MCF 10A (cell line): ENCODE measurements at regions of chr10 and their contacts with region 1.

Region 1: DNA sequence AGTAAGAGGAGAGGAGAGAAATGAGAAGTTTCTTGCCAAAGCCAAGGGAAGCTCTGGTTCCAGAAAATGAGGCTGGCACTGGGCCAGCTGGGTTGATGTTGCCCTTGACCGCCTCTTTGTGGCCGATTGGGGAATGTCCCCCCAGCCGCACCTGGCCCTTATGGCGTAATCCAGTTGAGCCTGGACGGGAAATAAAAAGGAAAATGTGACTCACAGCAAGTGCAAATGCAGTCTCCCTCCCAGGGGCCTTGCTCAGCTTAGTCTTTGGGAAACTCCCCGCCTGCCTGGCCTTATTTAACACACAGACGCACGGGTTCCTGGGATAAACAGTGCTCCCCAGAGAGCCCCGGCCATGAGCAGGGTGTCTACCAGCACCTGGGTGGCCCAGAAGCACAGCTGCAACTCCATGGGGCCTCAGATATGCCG is 174.8 kb downstream of the KIAA1217 start:
- DNase-seq: peak; percentile 98
- H3K4me3 Mint-ChIP-seq: peak overlapping the region; percentile 63
- H3K27ac Mint-ChIP-seq: peak overlapping the region; percentile 65
- H3K4me1 Mint-ChIP-seq: peaks cover 25% of the 10 kb centered on the region
- H3K27me3 Mint-ChIP-seq: no peaks in the 10 kb centered on the region
- CTCF ChIP-seq: peak; percentile 55

Region 2: DNA sequence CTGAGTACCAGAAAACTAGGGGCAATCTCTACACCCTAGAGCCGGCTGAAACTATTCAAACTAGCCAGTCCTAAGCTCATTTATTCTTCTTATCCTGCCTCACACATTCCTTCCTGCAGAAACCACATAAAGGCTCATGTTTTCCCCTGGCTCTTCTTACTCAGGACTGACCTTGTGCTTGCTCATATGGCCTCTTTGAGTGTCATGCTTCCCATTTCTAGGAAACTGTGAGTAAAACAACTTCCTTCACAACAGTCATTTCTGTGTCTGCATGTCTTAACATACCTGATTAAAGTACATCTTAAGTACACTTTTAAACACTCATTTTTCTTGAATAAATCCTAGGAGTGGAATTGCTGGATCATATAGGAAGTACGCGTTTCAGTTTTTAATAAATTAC is 227.0 kb before region 1 on chr10:
- CTCF ChIA-PET with region 1: no interaction called
- POLR2A ChIA-PET with region 1: no interaction called
- intact Hi-C with region 1: no loop called
- DNase-seq: no peak
- H3K4me3 Mint-ChIP-seq: no peak overlapping the region
- H3K27ac Mint-ChIP-seq: no peak overlapping the region
- H3K4me1 Mint-ChIP-seq: no peaks in the 10 kb centered on the region
- H3K27me3 Mint-ChIP-seq: peaks cover 53% of the 10 kb centered on the region
- CTCF ChIP-seq: no peak

Region 3: GRCh38 chr10:24255881-24256311 is 127.8 kb before region 1 on chr10:
- CTCF ChIA-PET with region 1: interaction called, 4 read pairs
- POLR2A ChIA-PET with region 1: interaction called, 19 read pairs
- intact Hi-C with region 1: no loop called
- DNase-seq: peak; percentile 93
- H3K4me3 Mint-ChIP-seq: peak overlapping the region; percentile 84
- H3K27ac Mint-ChIP-seq: peak overlapping the region; percentile 97
- H3K4me1 Mint-ChIP-seq: peaks cover 42% of the 10 kb centered on the region
- H3K27me3 Mint-ChIP-seq: no peaks in the 10 kb centered on the region
- CTCF ChIP-seq: no peak

Region 4: GRCh38 chr10:24360282-24361127 is 23.2 kb before region 1 on chr10:
- CTCF ChIA-PET with region 1: interaction called, 9 read pairs
- POLR2A ChIA-PET with region 1: interaction called, 16 read pairs
- intact Hi-C with region 1: no loop called
- DNase-seq: peak; percentile 87
- H3K4me3 Mint-ChIP-seq: no peak overlapping the region
- H3K27ac Mint-ChIP-seq: no peak overlapping the region
- H3K4me1 Mint-ChIP-seq: peaks cover 6% of the 10 kb centered on the region
- H3K27me3 Mint-ChIP-seq: no peaks in the 10 kb centered on the region
- CTCF ChIP-seq: peak; percentile 71

Region 5: GRCh38 chr10:24435374-24435773 is 51.7 kb after region 1 on chr10:
- CTCF ChIA-PET with region 1: no interaction called
- POLR2A ChIA-PET with region 1: interaction called, 25 read pairs
- intact Hi-C with region 1: no loop called
- DNase-seq: peak; percentile 56
- H3K4me3 Mint-ChIP-seq: no peak overlapping the region
- H3K27ac Mint-ChIP-seq: peak overlapping the region; percentile 36
- H3K4me1 Mint-ChIP-seq: peaks cover 11% of the 10 kb centered on the region
- H3K27me3 Mint-ChIP-seq: no peaks in the 10 kb centered on the region
- CTCF ChIP-seq: no peak

Region 6: GRCh38 chr10:24483489-24484100 is 99.9 kb after region 1 on chr10:
- CTCF ChIA-PET with region 1: interaction called, 6 read pairs
- POLR2A ChIA-PET with region 1: interaction called, 32 read pairs
- intact Hi-C with region 1: no loop called
- DNase-seq: peak; percentile 98
- H3K4me3 Mint-ChIP-seq: peak overlapping the region; percentile 55
- H3K27ac Mint-ChIP-seq: peak overlapping the region; percentile 98
- H3K4me1 Mint-ChIP-seq: peaks cover 32% of the 10 kb centered on the region
- H3K27me3 Mint-ChIP-seq: no peaks in the 10 kb centered on the region
- CTCF ChIP-seq: no peak